Right cardiac atrium (tissue), 5 donors: ENCODE measurements at regions of chr19 and their contacts with region 1.

Region 1: DNA sequence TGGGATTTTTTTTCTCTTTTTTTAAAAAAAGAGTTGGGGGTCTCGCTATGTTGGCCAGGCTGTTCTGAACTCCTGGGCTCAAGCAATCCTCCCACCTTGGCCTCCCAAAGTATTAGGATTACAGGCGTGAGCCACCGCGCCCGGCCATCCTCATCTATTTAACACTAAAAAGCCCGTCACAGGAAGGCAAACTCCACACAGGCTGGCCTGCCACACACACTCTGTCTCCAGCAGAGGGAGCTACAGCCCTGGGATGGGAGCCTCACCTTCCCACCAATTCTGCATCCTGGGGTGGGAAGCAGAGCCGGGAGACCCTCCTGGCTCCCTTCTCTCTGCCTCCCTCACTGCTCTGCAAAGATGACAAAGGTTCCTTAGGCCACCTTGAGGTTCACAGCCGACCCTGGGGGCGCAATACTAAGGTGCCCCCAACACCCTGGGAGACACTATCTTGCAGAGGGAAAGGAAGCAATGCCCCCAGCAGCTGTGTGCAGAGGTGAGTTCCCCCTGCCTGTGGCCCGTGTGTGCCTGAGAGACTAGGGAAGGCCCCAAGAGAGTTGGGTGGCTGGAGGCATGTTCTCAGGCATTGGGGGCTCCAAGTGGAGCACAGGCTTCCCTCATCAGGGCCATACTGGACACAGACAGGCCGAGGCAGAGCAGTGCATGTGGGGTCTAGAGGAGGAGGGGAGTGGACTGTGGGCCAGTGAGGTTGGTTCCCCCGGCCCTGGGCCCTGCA is 27.4 kb upstream of the TIMM44 start:
- DNase-seq: no peak
- ATAC-seq: no peak
- H3K4me3 ChIP-seq: no peak overlapping the region
- H3K27ac ChIP-seq: no peak overlapping the region
- H3K4me1 ChIP-seq: no peaks in the 10 kb centered on the region
- H3K27me3 ChIP-seq: no peaks in the 10 kb centered on the region

Region 2: DNA sequence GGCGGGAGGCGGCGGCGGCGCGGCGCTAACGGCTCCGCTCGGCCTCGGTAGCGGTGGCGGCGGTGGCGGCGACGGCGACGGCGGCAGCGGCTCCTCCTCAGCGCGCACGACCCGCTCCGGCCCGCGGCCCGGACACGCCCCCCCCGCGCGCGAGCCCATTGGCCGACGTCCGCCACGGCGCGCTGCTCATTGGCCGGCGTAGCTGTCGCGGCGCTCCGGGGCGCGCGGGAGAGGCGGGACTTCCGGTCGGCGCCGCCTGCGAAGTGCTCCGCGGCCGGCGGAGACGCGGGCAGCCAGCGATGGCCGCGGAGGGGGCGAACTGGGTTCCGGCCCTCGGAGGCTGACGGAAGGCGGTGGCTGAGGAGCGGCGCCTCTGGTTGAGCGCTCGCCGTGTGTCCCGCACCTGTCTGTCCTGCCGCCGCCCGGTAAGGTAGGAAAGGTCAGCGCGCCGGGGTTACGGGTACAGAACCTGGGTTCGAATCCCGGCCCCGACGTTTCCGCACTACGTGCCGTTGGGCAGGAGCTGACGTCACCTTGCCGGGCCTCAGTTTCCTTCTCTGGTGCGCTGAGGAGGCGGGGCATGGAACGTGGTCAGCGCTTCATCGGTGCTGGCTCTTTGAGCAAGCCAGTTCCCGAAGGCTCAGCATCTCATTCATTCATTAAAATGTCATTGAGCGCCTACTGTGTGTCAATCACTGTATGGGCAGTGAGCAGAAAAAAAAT is 34.8 kb after region 1 on chr19 and contains the start of gene ELAVL1:
- intact Hi-C with region 1: loop called in 2 of 4 experiments (anchors 5 kb)
- DNase-seq: peak; percentile 91 to 97 (median 97)
- ATAC-seq: peak; percentile 93
- H3K4me3 ChIP-seq: peak within 1 kb of the TSS; percentile 99
- H3K27ac ChIP-seq: peak within 1 kb of the TSS; percentile 84
- H3K4me1 ChIP-seq: peaks cover 13% of the 10 kb centered on the region
- H3K27me3 ChIP-seq: no peaks in the 10 kb centered on the region
- total RNA-seq, gene ELAVL1: 55.4 to 67.5 (median 64.6) TPM

Region 3: GRCh38 chr19:8158411-8159074 is 187.7 kb after region 1 on chr19:
- intact Hi-C with region 1: loop called in 1 of 4 experiments (anchors 10 kb)
- DNase-seq: no peak
- ATAC-seq: peak; percentile 64 to 69
- H3K4me3 ChIP-seq: no peak overlapping the region
- H3K27ac ChIP-seq: no peak overlapping the region
- H3K4me1 ChIP-seq: peaks cover 5% of the 10 kb centered on the region
- H3K27me3 ChIP-seq: no peaks in the 10 kb centered on the region

Region 4: DNA sequence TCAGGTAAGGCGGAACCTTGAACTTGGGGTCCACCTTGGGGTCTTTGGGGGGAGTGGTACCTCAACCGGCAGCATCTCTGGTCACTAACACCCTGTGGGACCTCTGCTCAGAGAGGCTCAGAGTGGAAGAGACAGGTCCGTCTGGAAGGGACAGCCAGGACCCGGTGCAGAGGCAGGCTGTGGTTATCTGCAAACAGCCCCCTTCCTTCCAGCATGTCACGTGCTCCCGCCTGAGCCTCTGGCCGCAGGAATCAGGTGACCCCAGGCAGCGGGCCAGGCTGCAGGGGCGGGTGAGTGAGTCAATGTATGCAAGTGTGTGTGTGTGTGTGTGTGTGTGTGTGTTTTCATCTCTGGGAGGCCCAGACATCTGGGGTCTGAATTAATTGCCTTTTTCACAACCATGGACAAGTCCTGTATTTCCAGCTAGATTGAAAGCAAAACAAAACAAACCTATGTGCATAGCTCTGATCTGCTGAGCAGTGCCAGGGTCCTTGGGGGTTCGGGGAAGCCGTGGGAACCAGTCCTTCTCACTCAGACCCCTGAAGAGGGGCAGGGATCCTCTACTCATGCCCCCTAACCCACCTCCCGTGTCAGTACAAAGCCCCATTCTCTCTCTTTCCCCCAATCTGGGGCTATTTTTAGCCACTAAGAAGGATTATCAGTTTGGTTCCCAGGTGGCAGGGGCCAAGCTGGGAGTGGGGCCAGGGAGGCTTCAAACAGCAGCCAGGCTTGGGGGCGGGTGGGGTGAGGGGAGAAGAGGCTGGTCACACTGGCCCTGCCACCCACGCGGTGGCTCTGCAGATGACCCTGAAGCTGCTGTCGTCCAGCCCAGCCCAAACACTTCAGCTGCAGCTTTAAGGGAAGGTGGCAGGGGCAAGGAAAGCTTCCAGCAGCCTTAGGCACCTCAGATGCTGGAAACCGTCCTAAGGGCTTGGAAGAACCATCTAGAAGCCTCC is 269.7 kb after region 1 on chr19:
- intact Hi-C with region 1: loop called in 1 of 4 experiments (anchors 10 kb)
- DNase-seq: peak; percentile 88 to 95 (median 94)
- ATAC-seq: peak; percentile 81 to 90
- H3K4me3 ChIP-seq: no peak overlapping the region
- H3K27ac ChIP-seq: peak overlapping the region; percentile 77
- H3K4me1 ChIP-seq: peaks cover 7% of the 10 kb centered on the region
- H3K27me3 ChIP-seq: no peaks in the 10 kb centered on the region